Psoas muscle (tissue), 8 donors: ENCODE measurements at regions of chr18 and their contacts with region 1.

Region 1: GRCh38 chr18:25517881-25518715 is 166.1 kb upstream of the ZNF521 start:
- DNase-seq: no peak
- ATAC-seq: no peak
- H3K4me3 ChIP-seq: no peak overlapping the region
- H3K27ac ChIP-seq: no peak overlapping the region
- H3K4me1 ChIP-seq: peaks cover 5% of the 10 kb centered on the region
- H3K27me3 ChIP-seq: no peaks in the 10 kb centered on the region
- CTCF ChIP-seq: no peak

Region 2: GRCh38 chr18:25360301-25360899 is 157.7 kb before region 1 on chr18:
- intact Hi-C with region 1: loop called in 1 of 2 experiments (anchors 10 kb)
- DNase-seq: no peak
- ATAC-seq: no peak
- H3K4me3 ChIP-seq: no peak overlapping the region
- H3K27ac ChIP-seq: no peak overlapping the region
- H3K4me1 ChIP-seq: no peaks in the 10 kb centered on the region
- H3K27me3 ChIP-seq: no peaks in the 10 kb centered on the region
- CTCF ChIP-seq: no peak